Cardiac septum (tissue), 1 donor: ENCODE measurements at regions of chr9 and their contacts with region 1.

Region 1: GRCh38 chr9:72871685-72872084 is 81.2 kb downstream of the ALDH1A1 start:
- DNase-seq: no peak

Region 2: GRCh38 chr9:73023025-73023541 is 151.4 kb after region 1 on chr9:
- intact Hi-C with region 1: loop called (anchors 5 kb)
- DNase-seq: no peak

Region 3: DNA sequence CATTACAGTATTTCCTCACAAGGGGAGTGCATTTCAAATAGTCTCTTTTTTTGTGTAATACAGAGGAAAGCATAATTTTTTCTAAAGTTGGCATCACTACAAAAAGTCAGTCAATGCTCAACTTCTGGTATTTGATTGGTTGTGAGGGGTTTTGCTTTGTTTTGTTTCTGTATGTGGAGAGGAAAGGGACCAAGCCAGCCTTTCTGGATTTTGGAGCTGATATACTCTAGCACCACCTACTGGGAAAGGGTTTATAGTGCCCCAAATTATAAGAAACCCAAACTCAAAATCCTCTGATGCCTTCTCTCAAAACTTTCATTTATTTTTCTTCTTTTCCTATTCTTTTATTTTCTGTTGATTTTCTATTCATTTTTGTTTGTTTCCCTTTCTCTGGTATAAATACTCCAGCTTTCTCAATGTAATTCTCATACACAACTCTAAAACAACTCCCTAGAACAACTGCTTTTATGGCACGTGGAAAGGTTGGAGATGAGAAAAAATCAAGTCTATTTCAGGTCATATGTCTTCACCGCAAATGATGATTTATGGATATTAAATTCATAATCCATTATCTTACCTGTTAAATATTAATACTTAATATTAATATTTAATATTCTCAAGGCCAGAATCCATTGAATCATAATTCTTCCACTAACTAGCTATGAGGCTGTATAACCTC is 210.4 kb after region 1 on chr9:
- intact Hi-C with region 1: loop called (anchors 5 kb)
- DNase-seq: no peak